Activated naive CD8-positive, alpha-beta T cell treated with anti-CD3 and anti-CD28 coated beads, Interleukin-2, amount 10 ng/mL, durations not matched to agents 7 days and 5 days (primary cell): ENCODE measurements at regions of chr2 and their contacts with region 1.

Region 1: GRCh38 chr2:44361330-44362206 is at the starts of genes CAMKMT and PREPL:
- DNase-seq: peak; percentile 95
- ATAC-seq: peak; percentile 90
- H3K4me3 Mint-ChIP-seq: peak within 1 kb of the TSS; percentile 94
- H3K27ac Mint-ChIP-seq: peak within 1 kb of the TSS; percentile 94
- H3K4me1 Mint-ChIP-seq: peaks cover 29% of the 10 kb centered on the region
- H3K27me3 Mint-ChIP-seq: no peaks in the 10 kb centered on the region
- total RNA-seq, gene CAMKMT: 12.9 to 13.3 TPM
- total RNA-seq, gene PREPL: 27.8 to 30.6 TPM

Region 2: GRCh38 chr2:44167940-44168680 is 193.5 kb before region 1 on chr2:
- POLR2A ChIA-PET with region 1: interaction called, 31 read pairs
- DNase-seq: peak; percentile 84
- ATAC-seq: peak; percentile 83
- H3K4me3 Mint-ChIP-seq: peak overlapping the region; percentile 98
- H3K27ac Mint-ChIP-seq: peak overlapping the region; percentile 98
- H3K4me1 Mint-ChIP-seq: peaks cover 23% of the 10 kb centered on the region
- H3K27me3 Mint-ChIP-seq: no peaks in the 10 kb centered on the region

Region 3: GRCh38 chr2:44429034-44429433 is 67.5 kb after region 1 on chr2:
- POLR2A ChIA-PET with region 1: no interaction called
- DNase-seq: no peak
- ATAC-seq: no peak
- H3K4me3 Mint-ChIP-seq: no peak overlapping the region
- H3K27ac Mint-ChIP-seq: no peak overlapping the region
- H3K4me1 Mint-ChIP-seq: peaks cover 8% of the 10 kb centered on the region
- H3K27me3 Mint-ChIP-seq: no peaks in the 10 kb centered on the region